ENCODE measurements at regions of chr7 and their contacts with region 1.

Region 1: DNA sequence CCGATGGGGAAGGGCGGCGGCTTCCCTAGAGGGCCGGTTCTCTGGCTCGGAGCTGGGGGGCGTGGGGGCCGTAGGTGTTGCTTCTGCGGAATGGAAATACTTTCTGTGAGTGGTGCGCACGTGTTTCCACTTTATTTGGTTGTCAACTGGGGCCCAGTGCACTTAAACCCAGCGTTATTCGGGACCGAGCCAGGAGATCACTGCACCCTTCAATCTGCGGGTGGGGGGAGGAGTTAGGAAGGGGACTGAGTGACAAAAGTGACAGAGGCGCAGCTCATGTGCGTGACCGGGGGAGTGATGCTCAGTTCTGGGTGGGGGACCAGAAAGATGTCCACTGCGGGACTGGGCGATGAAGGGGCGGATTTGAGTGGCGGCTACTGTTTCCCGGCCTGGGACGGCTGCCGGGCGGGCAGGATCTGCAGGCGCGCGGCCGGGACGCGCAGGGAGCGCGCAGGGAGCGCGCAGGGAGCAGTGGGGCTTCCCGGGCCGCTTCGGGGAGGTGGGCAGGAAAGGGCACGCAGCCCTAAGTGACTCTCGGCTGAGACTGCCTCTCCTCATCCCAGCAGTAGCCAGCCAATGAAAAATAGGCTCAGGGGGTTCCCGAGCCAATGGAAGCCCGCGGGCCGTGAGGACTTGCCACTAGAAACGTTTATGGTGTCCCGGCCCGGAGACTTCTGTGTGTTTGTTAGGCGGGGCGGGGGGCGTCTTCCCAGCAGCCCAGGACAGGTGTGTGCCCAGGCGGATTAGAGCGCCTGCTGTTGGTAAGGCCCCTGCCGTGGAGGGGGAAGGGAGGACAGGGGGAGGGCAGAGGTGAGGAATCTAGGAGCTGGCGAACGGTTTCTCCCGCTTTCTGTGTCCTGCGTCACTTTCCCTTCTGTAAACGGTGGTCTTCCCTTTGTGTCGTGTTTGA is 54.3 kb upstream of the KDM7A start:
- DNase-seq: peak in 8 of 9 experiments; percentile 25 to 80 (median 62)
- ATAC-seq: peak; percentile 19
- H3K4me3 ChIP-seq: peak overlapping the region; percentile 73
- H3K4me3 Mint-ChIP-seq: peak overlapping the region; percentile 92
- H3K27ac ChIP-seq: peak overlapping the region; percentile 83 to 85
- H3K27ac Mint-ChIP-seq: peak overlapping the region; percentile 100
- H3K4me1 ChIP-seq: peaks cover 25% of the 10 kb centered on the region
- H3K4me1 Mint-ChIP-seq: peaks cover 40% of the 10 kb centered on the region
- H3K27me3 ChIP-seq: no peaks in the 10 kb centered on the region
- H3K27me3 Mint-ChIP-seq: no peaks in the 10 kb centered on the region
- CTCF ChIP-seq: no peak

Region 2: GRCh38 chr7:139340037-139340807 is 890.9 kb before region 1 on chr7:
- CTCF ChIA-PET with region 1: no interaction called
- POLR2A ChIA-PET with region 1: no interaction called
- intact Hi-C with region 1: loop called in 1 of 2 experiments (anchors 5 kb)
- DNase-seq: peak; percentile 95 to 100 (median 97)
- ATAC-seq: peak; percentile 80
- H3K4me3 ChIP-seq: peak overlapping the region; percentile 69 to 85
- H3K4me3 Mint-ChIP-seq: peak overlapping the region; percentile 98
- H3K27ac ChIP-seq: peak overlapping the region; percentile 94 to 98
- H3K27ac Mint-ChIP-seq: peak overlapping the region; percentile 100
- H3K4me1 ChIP-seq: peaks cover 13% of the 10 kb centered on the region
- H3K4me1 Mint-ChIP-seq: peaks cover 32% of the 10 kb centered on the region
- H3K27me3 ChIP-seq: no peaks in the 10 kb centered on the region
- H3K27me3 Mint-ChIP-seq: peaks cover 2% of the 10 kb centered on the region
- CTCF ChIP-seq: peak; percentile 36

Region 3: GRCh38 chr7:140062528-140063299 is 168.4 kb before region 1 on chr7 and contains the start of gene PARP12:
- CTCF ChIA-PET with region 1: no interaction called
- POLR2A ChIA-PET with region 1: interaction called, 3 read pairs
- intact Hi-C with region 1: loop called (anchors 5 to 10 kb)
- DNase-seq: peak; percentile 78 to 94 (median 87)
- ATAC-seq: peak; percentile 76
- H3K4me3 ChIP-seq: peak within 1 kb of the TSS; percentile 68 to 86
- H3K4me3 Mint-ChIP-seq: peak within 1 kb of the TSS; percentile 95
- H3K27ac ChIP-seq: peak within 1 kb of the TSS; percentile 82
- H3K27ac Mint-ChIP-seq: peak within 1 kb of the TSS; percentile 94
- H3K4me1 ChIP-seq: peaks cover 34% of the 10 kb centered on the region
- H3K4me1 Mint-ChIP-seq: peaks cover 42% of the 10 kb centered on the region
- H3K27me3 ChIP-seq: no peaks in the 10 kb centered on the region
- H3K27me3 Mint-ChIP-seq: no peaks in the 10 kb centered on the region
- CTCF ChIP-seq: no peak
- total RNA-seq, gene PARP12: 70.3 to 85.5 TPM

Region 4: GRCh38 chr7:140249036-140249806 is 18.1 kb after region 1 on chr7:
- CTCF ChIA-PET with region 1: interaction called, 4 read pairs
- POLR2A ChIA-PET with region 1: interaction called, 13 read pairs
- intact Hi-C with region 1: loop called in 1 of 2 experiments (anchors 2 kb)
- DNase-seq: no peak
- ATAC-seq: no peak
- H3K4me3 ChIP-seq: no peak overlapping the region
- H3K4me3 Mint-ChIP-seq: no peak overlapping the region
- H3K27ac ChIP-seq: no peak overlapping the region
- H3K27ac Mint-ChIP-seq: no peak overlapping the region
- H3K4me1 ChIP-seq: peaks cover 12% of the 10 kb centered on the region
- H3K4me1 Mint-ChIP-seq: peaks cover 14% of the 10 kb centered on the region
- H3K27me3 ChIP-seq: no peaks in the 10 kb centered on the region
- H3K27me3 Mint-ChIP-seq: no peaks in the 10 kb centered on the region
- CTCF ChIP-seq: no peak

Region 5: GRCh38 chr7:140260352-140261104 is 29.4 kb after region 1 on chr7:
- CTCF ChIA-PET with region 1: no interaction called
- POLR2A ChIA-PET with region 1: interaction called, 37 read pairs
- intact Hi-C with region 1: loop called (anchors 1 kb)
- DNase-seq: no peak
- ATAC-seq: no peak
- H3K4me3 ChIP-seq: no peak overlapping the region
- H3K4me3 Mint-ChIP-seq: no peak overlapping the region
- H3K27ac ChIP-seq: no peak overlapping the region
- H3K27ac Mint-ChIP-seq: peak overlapping the region; percentile 32
- H3K4me1 ChIP-seq: peaks cover 47% of the 10 kb centered on the region
- H3K4me1 Mint-ChIP-seq: peaks cover 51% of the 10 kb centered on the region
- H3K27me3 ChIP-seq: no peaks in the 10 kb centered on the region
- H3K27me3 Mint-ChIP-seq: no peaks in the 10 kb centered on the region
- CTCF ChIP-seq: no peak

Region 6: GRCh38 chr7:140304191-140304799 is 73.2 kb after region 1 on chr7:
- CTCF ChIA-PET with region 1: interaction called, 35 read pairs
- POLR2A ChIA-PET with region 1: interaction called, 4 read pairs
- intact Hi-C with region 1: loop called (anchors 1 kb)
- DNase-seq: peak in 8 of 9 experiments; percentile 11 to 80 (median 46)
- ATAC-seq: peak; percentile 96
- H3K4me3 ChIP-seq: no peak overlapping the region
- H3K4me3 Mint-ChIP-seq: no peak overlapping the region
- H3K27ac ChIP-seq: peak overlapping the region in 1 of 2 experiments; percentile 17
- H3K27ac Mint-ChIP-seq: peak overlapping the region; percentile 87
- H3K4me1 ChIP-seq: peaks cover 5% of the 10 kb centered on the region
- H3K4me1 Mint-ChIP-seq: peaks cover 5% of the 10 kb centered on the region
- H3K27me3 ChIP-seq: no peaks in the 10 kb centered on the region
- H3K27me3 Mint-ChIP-seq: no peaks in the 10 kb centered on the region
- CTCF ChIP-seq: peak; percentile 60

Region 7: GRCh38 chr7:140397784-140398750 is 167.0 kb after region 1 on chr7 and contains the start of gene SLC37A3:
- CTCF ChIA-PET with region 1: no interaction called
- POLR2A ChIA-PET with region 1: no interaction called
- intact Hi-C with region 1: loop called in 1 of 2 experiments (anchors 5 kb)
- DNase-seq: peak; percentile 70 to 91 (median 87)
- ATAC-seq: peak; percentile 96
- H3K4me3 ChIP-seq: peak within 1 kb of the TSS; percentile 77 to 84
- H3K4me3 Mint-ChIP-seq: peak within 1 kb of the TSS; percentile 90
- H3K27ac ChIP-seq: peak within 1 kb of the TSS; percentile 48 to 59
- H3K27ac Mint-ChIP-seq: peak within 1 kb of the TSS; percentile 81
- H3K4me1 ChIP-seq: peaks cover 14% of the 10 kb centered on the region
- H3K4me1 Mint-ChIP-seq: peaks cover 28% of the 10 kb centered on the region
- H3K27me3 ChIP-seq: no peaks in the 10 kb centered on the region
- H3K27me3 Mint-ChIP-seq: no peaks in the 10 kb centered on the region
- CTCF ChIP-seq: peak; percentile 25
- total RNA-seq, gene SLC37A3: 28.4 to 32.1 TPM